Ovary (tissue), 10 donors: ENCODE measurements at regions of chr9 and their contacts with region 1.

Region 1: GRCh38 chr9:17881371-17881770 is 302.5 kb downstream of the SH3GL2 start:
- DNase-seq: no peak
- H3K4me3 ChIP-seq: no peak overlapping the region
- H3K27ac ChIP-seq: no peak overlapping the region
- H3K4me1 ChIP-seq: no peaks in the 10 kb centered on the region
- H3K27me3 ChIP-seq: no peaks in the 10 kb centered on the region
- CTCF ChIP-seq: no peak
- EP300 ChIP-seq: no peak
- POLR2A ChIP-seq: no peak

Region 2: GRCh38 chr9:16184964-16185646 is 1696.3 kb before region 1 on chr9:
- intact Hi-C with region 1: loop called in 1 of 4 experiments (anchors 5 kb)
- DNase-seq: no peak
- H3K4me3 ChIP-seq: no peak overlapping the region
- H3K27ac ChIP-seq: no peak overlapping the region
- H3K4me1 ChIP-seq: no peaks in the 10 kb centered on the region
- H3K27me3 ChIP-seq: no peaks in the 10 kb centered on the region
- CTCF ChIP-seq: no peak
- EP300 ChIP-seq: no peak
- POLR2A ChIP-seq: no peak

Region 3: DNA sequence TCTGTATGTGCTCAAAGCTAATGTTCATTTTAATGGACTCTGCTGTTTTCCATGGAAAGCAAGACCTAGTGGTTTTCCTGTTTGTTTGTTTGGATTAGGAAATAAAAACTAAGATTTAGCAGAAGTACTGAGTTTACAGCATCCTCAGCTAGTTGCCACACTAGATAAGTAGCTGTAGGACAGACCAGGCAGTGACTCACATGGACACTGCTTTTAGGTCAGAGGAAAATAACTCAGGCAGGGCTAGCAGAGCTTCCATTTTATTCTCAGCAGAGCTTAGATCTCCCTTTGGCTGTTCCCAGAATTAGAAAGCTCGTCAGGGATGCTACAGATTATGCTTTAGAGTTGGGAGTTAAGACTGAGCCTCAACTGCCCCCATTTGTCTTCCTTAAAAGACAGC is 98.1 kb before region 1 on chr9:
- intact Hi-C with region 1: no loop called
- DNase-seq: no peak
- H3K4me3 ChIP-seq: no peak overlapping the region
- H3K27ac ChIP-seq: no peak overlapping the region
- H3K4me1 ChIP-seq: no peaks in the 10 kb centered on the region
- H3K27me3 ChIP-seq: no peaks in the 10 kb centered on the region
- CTCF ChIP-seq: no peak
- EP300 ChIP-seq: no peak
- POLR2A ChIP-seq: no peak

Region 4: DNA sequence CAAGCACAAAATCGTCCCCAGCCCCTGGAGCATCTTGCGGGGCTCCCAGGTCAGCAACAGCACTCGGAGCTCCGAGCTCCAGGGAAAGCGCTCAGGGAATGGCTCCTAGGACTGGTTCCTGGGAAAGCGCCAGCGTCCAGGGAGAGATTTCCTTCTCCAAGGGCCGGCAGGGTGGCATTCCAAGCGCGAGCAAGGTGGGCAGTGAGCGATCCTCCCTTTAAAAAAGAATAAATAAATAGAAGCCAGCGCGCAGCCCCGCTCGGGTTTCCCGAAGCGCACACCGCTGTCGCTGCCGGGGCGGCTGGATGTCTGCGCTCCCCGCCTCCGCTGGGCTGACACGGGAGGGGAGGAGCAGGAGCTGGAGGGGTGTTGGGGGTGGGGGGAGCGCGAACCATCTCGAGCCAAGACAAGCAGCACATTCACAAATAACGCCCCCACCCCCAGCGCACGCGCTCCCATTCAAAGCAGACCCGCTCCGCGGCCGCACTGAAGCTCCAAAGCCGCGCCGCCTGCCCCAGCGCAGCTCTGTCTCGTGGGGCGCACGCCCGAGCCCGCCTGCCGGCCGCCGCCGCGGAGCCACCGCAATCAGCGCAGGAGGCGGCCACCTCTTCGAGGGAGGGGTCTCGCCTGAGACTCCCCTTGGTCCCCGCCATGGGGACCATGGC is 24.9 kb after region 1 on chr9:
- intact Hi-C with region 1: no loop called
- DNase-seq: peak in 4 of 5 donors; percentile 23 to 43 (median 36)
- H3K4me3 ChIP-seq: peak overlapping the region; percentile 49
- H3K27ac ChIP-seq: peak overlapping the region in 1 of 2 donors; percentile 4
- H3K4me1 ChIP-seq: peaks cover 4% of the 10 kb centered on the region
- H3K27me3 ChIP-seq: no peaks in the 10 kb centered on the region
- CTCF ChIP-seq: no peak
- EP300 ChIP-seq: no peak
- POLR2A ChIP-seq: no peak